Activated CD8-positive, alpha-beta T cell treated with anti-CD3 and anti-CD28 coated beads for 36 hours (primary cell): ENCODE measurements at regions of chr1 and their contacts with region 1.

Region 1: GRCh38 chr1:22704440-22705067 is 6.1 kb upstream of the EPHB2 start:
- DNase-seq: peak; percentile 90
- ATAC-seq: peak; percentile 100
- H3K4me3 Mint-ChIP-seq: no peak overlapping the region
- H3K27ac Mint-ChIP-seq: no peak overlapping the region
- H3K4me1 Mint-ChIP-seq: no peaks in the 10 kb centered on the region
- H3K27me3 Mint-ChIP-seq: peaks cover 24% of the 10 kb centered on the region
- CTCF ChIP-seq: peak; percentile 78

Region 2: DNA sequence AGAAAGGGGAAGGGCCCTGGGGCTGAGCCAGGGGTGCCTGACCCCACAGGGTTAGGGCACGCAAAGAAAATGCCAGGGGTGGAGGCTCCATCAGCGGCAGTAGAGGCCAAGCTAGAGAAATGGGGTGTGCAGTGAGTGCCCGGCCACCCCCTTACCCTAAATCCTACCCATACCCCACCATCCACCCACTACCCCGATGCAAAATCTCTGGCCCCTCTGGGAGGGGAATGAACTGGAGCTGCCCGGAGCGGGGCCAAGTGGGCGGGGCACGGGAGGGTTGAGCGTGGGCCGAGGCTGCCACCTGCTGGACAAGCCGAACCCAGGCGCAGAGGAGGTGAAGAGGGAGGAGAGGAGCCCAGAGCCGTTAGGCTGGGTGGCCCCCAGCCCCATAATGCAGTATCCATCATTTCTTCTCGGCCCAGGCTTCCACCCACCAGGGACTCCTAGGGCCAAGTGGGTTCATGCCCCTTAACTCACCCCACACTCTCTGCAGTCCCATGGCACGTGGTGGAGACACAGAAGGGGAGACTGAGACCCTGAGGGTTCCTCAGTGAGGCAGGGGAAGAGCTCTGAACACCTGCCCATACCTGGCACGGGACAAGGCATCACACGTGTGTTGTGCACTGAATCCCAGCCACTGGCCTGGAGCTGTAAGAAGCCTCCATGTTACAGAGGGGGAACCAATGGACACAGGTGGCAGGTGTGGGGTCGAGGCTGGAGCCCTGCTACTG is 62.5 kb before region 1 on chr1:
- CTCF ChIA-PET with region 1: no interaction called
- POLR2A ChIA-PET with region 1: no interaction called
- intact Hi-C with region 1: no loop called
- DNase-seq: peak; percentile 73
- ATAC-seq: peak; percentile 83
- H3K4me3 Mint-ChIP-seq: no peak overlapping the region
- H3K27ac Mint-ChIP-seq: no peak overlapping the region
- H3K4me1 Mint-ChIP-seq: no peaks in the 10 kb centered on the region
- H3K27me3 Mint-ChIP-seq: peaks cover 9% of the 10 kb centered on the region
- CTCF ChIP-seq: peak; percentile 83

Region 3: GRCh38 chr1:22691031-22691753 is 13.4 kb before region 1 on chr1:
- CTCF ChIA-PET with region 1: interaction called, 14 read pairs
- POLR2A ChIA-PET with region 1: no interaction called
- intact Hi-C with region 1: no loop called
- DNase-seq: no peak
- ATAC-seq: no peak
- H3K4me3 Mint-ChIP-seq: no peak overlapping the region
- H3K27ac Mint-ChIP-seq: no peak overlapping the region
- H3K4me1 Mint-ChIP-seq: no peaks in the 10 kb centered on the region
- H3K27me3 Mint-ChIP-seq: peaks cover 7% of the 10 kb centered on the region
- CTCF ChIP-seq: no peak

Region 4: DNA sequence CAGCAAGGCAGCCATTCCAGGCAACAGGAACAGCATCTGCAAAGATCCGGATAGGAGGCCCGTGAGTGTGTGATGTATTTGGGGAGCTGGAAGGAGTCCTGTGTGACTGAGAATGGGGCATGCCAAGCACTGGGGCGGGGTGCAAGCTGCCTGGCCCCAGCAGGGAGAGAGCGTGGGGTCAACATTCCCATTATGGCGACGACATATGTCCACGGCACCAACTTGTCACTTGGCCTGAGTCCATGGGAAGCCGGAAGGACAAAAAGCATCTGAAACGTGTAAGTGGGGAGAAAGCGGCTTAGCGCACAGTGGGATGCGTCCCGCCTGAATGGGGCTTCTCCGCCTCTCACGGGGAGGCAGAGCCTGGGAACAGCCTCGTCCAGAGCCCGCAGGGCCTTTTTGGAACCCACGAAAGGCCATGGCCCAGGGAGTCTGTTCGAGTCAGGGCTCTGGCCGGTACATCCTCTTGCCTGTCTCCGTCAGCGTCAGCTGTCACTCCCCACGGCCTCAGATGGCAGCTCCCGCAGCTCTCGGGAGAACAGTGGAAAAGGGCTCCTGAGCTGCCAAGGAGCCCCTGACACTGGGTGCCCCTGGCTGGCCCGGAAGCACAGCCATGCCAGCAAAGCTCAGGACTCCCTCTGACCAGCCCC is 18.5 kb after region 1 on chr1:
- CTCF ChIA-PET with region 1: interaction called, 19 read pairs
- POLR2A ChIA-PET with region 1: no interaction called
- intact Hi-C with region 1: no loop called
- DNase-seq: no peak
- ATAC-seq: no peak
- H3K4me3 Mint-ChIP-seq: no peak overlapping the region
- H3K27ac Mint-ChIP-seq: no peak overlapping the region
- H3K4me1 Mint-ChIP-seq: no peaks in the 10 kb centered on the region
- H3K27me3 Mint-ChIP-seq: peaks cover 9% of the 10 kb centered on the region
- CTCF ChIP-seq: no peak

Region 5: DNA sequence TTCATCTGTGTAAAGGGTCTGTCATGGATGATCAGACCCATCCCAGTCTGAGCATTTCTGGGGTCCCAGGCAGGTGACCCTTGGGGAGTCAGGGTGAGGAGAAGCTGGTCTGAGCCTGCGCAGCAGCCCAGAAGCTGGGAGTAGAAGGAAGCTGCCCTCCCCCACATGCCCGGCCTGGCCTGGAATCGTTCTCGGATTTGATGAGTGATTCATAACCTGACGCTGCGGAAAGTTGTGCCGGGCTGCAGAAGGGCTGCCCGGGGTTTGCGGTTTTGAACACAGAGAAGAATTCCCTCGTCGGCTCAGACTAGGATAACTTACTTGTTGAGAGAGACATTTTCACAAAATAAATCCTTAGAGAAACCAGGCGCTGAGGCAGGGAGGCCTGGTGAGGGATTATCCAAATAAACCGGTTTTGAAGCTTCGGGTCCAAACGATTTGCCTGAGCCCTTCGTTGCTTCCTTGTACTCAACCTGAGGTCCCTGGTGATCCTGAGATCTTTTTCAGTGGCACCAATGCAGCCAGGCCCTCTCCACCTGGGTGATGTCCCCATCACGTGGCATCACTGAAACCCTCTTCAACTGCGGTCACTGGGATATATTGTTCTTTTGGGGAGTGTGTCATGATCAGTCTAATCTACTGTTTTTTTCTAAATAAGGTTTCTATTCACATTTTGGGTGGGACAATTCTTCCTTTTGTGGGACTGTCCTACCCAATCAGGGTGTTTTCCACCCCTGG is 35.3 kb after region 1 on chr1:
- CTCF ChIA-PET with region 1: no interaction called
- POLR2A ChIA-PET with region 1: no interaction called
- intact Hi-C with region 1: no loop called
- DNase-seq: no peak
- ATAC-seq: no peak
- H3K4me3 Mint-ChIP-seq: no peak overlapping the region
- H3K27ac Mint-ChIP-seq: no peak overlapping the region
- H3K4me1 Mint-ChIP-seq: no peaks in the 10 kb centered on the region
- H3K27me3 Mint-ChIP-seq: peaks cover 12% of the 10 kb centered on the region
- CTCF ChIP-seq: no peak

Region 6: GRCh38 chr1:22889213-22889827 is 184.8 kb after region 1 on chr1:
- CTCF ChIA-PET with region 1: interaction called, 17 read pairs
- POLR2A ChIA-PET with region 1: no interaction called
- intact Hi-C with region 1: no loop called
- DNase-seq: peak; percentile 37
- ATAC-seq: peak; percentile 69
- H3K4me3 Mint-ChIP-seq: no peak overlapping the region
- H3K27ac Mint-ChIP-seq: no peak overlapping the region
- H3K4me1 Mint-ChIP-seq: peaks cover 9% of the 10 kb centered on the region
- H3K27me3 Mint-ChIP-seq: peaks cover 5% of the 10 kb centered on the region
- CTCF ChIP-seq: peak; percentile 67

Region 7: DNA sequence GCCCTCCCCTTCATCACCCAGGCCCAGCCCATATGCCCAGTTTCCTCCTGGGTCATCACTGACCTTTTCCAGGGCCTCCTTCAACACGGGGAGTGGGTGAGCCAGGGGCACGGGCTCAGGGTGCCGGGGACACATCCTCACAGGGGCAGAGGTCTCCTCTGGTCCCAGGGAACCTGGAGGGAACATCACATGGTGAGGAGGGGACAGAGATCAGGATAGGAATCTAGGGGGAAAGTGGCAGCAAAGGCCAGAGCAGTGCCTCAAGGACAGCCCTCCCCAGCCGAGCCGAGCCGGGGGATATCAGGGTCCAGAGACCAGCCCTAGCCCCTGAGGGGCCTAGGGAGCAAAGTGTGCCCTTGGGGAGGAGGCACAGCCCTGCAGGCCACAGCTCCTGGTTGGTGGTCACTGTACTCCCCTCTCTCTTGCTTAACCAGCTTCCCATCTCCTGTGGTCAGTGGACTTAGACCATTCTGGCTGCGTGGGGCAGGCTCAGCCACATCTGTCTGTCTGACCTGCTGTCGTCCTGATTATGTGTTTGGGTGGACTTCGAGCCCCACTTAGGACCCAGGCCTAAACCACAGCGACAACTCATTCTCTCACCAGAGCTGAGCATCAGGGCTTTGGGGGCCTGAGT is 258.6 kb after region 1 on chr1:
- CTCF ChIA-PET with region 1: interaction called, 12 read pairs
- POLR2A ChIA-PET with region 1: no interaction called
- intact Hi-C with region 1: no loop called
- DNase-seq: no peak
- ATAC-seq: no peak
- H3K4me3 Mint-ChIP-seq: no peak overlapping the region
- H3K27ac Mint-ChIP-seq: no peak overlapping the region
- H3K4me1 Mint-ChIP-seq: peaks cover 2% of the 10 kb centered on the region
- H3K27me3 Mint-ChIP-seq: peaks cover 11% of the 10 kb centered on the region
- CTCF ChIP-seq: no peak

Region 8: GRCh38 chr1:23103001-23103889 is 398.7 kb after region 1 on chr1:
- CTCF ChIA-PET with region 1: no interaction called
- POLR2A ChIA-PET with region 1: no interaction called
- intact Hi-C with region 1: no loop called
- DNase-seq: peak; percentile 67
- ATAC-seq: peak; percentile 86
- H3K4me3 Mint-ChIP-seq: peak overlapping the region; percentile 62
- H3K27ac Mint-ChIP-seq: peak overlapping the region; percentile 95
- H3K4me1 Mint-ChIP-seq: peaks cover 45% of the 10 kb centered on the region
- H3K27me3 Mint-ChIP-seq: no peaks in the 10 kb centered on the region
- CTCF ChIP-seq: no peak